SK-N-SH (cell line): ENCODE measurements at regions of chr12 and their contacts with region 1.

Region 1: DNA sequence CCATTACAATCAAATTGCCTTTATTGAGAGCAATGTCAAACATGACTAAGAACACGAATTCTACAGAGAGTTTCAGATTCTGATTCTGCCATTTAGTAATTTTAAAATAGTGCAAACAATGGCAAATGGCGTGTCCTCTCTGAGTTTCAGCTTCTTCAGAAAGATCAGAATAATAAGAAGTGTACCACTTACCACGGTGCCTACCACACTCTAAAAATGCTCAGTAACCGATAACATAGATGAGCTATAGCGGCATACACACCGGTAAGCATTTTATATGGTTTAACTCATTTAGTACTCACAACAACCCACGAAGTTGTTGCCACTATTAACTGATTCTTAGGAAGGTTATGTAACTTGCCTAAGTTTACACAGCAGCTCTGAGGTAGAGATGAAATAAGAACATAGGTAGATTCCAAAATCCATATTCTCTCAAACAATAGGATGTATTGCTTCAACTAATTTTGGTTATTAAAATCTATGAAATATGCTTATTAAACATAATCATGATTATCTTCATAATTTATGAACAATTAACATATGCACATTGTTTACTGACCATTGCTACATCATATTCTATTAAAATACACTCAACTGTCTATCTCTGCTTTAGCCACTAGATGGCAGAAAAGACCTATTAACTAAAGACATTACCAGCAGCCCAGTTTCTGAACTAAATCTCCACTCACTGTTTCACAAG is 38.3 kb downstream of the SLC6A15 start:
- DNase-seq: peak; percentile 38
- H3K4me3 ChIP-seq: no peak overlapping the region; a peak in 1 of 4 replicates
- H3K27ac ChIP-seq: no peak overlapping the region
- H3K4me1 ChIP-seq: peaks cover 0 to 2% of the 10 kb centered on the region in 2 experiments; a peak in 2 of 4 replicates
- H3K27me3 ChIP-seq: no peaks in the 10 kb centered on the region
- CTCF ChIP-seq: peak; percentile 87
- EP300 ChIP-seq: no peak
- RAD21 ChIP-seq: peak; percentile 97

Region 2: DNA sequence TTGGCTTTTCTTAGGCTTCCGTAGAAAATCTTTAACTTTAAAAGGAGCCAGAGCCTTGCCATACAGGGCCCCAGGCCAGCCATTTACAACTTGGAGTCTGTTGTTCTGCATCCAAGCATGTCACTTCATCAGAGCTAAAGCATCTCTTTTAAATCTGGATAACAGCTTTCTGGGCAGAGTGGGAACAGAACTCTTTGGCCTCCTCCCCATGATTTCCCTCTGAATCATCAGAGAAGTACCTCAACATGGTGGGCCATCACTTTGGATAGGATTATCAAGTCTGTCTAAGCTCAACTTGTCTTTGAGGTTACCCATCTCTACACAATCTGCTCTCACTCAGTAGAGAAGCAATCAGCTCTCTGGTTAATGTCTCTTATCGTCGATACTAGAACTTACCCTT is 132.6 kb before region 1 on chr12:
- CTCF ChIA-PET with region 1: no interaction called
- POLR2A ChIA-PET with region 1: no interaction called
- DNase-seq: no peak
- H3K4me3 ChIP-seq: no peak overlapping the region
- H3K27ac ChIP-seq: no peak overlapping the region
- H3K4me1 ChIP-seq: peaks cover 0 to 5% of the 10 kb centered on the region in 2 experiments; a peak in 3 of 4 replicates
- H3K27me3 ChIP-seq: no peaks in the 10 kb centered on the region
- CTCF ChIP-seq: no peak
- EP300 ChIP-seq: peak in 1 of 2 experiments; percentile 28; a peak in 1 of 4 replicates
- RAD21 ChIP-seq: no peak

Region 3: DNA sequence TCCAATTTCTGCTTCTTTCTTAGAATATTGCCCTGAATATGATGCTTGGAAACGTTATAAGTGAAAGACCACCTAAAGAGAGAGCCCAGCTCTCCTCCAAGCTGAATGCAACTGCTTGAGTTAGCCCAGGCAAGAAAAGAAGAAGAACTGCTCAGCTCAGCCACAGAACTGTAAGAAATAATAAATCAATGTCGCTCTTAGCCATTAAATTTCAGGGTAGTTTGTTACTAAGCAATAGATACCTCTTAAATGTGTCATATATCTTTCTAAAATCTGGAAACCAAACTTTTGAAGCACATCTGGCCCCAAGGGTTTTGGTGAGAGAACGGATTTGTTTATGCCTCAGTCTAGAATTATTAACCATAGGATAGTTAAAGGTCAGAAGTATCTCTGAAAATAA is 12.1 kb before region 1 on chr12:
- CTCF ChIA-PET with region 1: interaction called, 18 read pairs
- POLR2A ChIA-PET with region 1: no interaction called
- DNase-seq: no peak
- H3K4me3 ChIP-seq: no peak overlapping the region
- H3K27ac ChIP-seq: no peak overlapping the region
- H3K4me1 ChIP-seq: peaks cover 0 to 3% of the 10 kb centered on the region in 2 experiments; a peak in 2 of 4 replicates
- H3K27me3 ChIP-seq: no peaks in the 10 kb centered on the region
- CTCF ChIP-seq: no peak
- EP300 ChIP-seq: no peak
- RAD21 ChIP-seq: no peak

Region 4: DNA sequence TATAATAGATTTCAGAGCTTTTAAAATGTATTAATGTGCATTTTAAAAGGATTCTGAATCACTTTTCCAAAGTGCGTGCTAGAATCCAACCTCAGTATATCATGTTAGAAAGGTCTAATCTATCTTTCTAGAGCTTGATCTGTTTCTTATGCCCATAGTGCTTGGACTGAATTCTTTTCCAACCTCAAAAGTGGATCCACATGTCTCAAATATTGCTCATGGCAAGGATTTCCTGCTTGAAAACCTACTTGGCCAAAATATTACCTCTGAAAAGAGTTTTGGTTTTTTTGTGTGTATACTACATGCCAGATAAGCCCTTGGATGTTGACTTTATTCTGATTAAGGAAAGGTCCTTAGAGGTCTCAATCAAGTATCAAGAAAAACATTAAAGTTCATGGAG is 55.2 kb after region 1 on chr12:
- CTCF ChIA-PET with region 1: interaction called, 14 read pairs
- POLR2A ChIA-PET with region 1: no interaction called
- DNase-seq: no peak
- H3K4me3 ChIP-seq: no peak overlapping the region
- H3K27ac ChIP-seq: no peak overlapping the region
- H3K4me1 ChIP-seq: no peaks in the 10 kb centered on the region
- H3K27me3 ChIP-seq: no peaks in the 10 kb centered on the region
- CTCF ChIP-seq: no peak
- EP300 ChIP-seq: no peak
- RAD21 ChIP-seq: no peak

Region 5: DNA sequence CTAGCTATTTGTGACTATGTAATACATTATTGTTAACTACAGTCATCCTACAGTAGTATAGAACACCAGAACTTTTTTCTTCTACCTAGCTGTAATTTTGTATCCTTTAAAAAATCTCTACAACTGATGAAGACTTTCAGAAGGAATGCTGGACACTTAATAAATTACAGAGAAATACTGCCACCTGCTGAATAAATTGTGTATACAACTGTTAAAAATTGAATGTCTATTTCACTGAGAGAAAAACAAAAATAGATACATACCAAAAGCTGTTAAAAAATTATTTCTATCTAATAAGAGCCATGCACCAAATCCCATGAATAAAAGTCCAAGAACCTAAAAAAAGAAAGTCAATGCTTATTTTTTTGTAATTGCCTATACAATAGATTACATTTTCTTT is 155.2 kb after region 1 on chr12:
- CTCF ChIA-PET with region 1: interaction called, 292 read pairs
- POLR2A ChIA-PET with region 1: no interaction called
- DNase-seq: no peak
- H3K4me3 ChIP-seq: no peak overlapping the region
- H3K27ac ChIP-seq: no peak overlapping the region
- H3K4me1 ChIP-seq: peaks cover 0 to 3% of the 10 kb centered on the region in 2 experiments; a peak in 2 of 4 replicates
- H3K27me3 ChIP-seq: no peaks in the 10 kb centered on the region
- CTCF ChIP-seq: peak; percentile 73
- EP300 ChIP-seq: no peak
- RAD21 ChIP-seq: peak; percentile 77

Region 6: GRCh38 chr12:85057370-85057963 is 183.2 kb after region 1 on chr12:
- CTCF ChIA-PET with region 1: interaction called, 27 read pairs
- POLR2A ChIA-PET with region 1: no interaction called
- DNase-seq: peak; percentile 33
- H3K4me3 ChIP-seq: no peak overlapping the region
- H3K27ac ChIP-seq: no peak overlapping the region
- H3K4me1 ChIP-seq: no peaks in the 10 kb centered on the region
- H3K27me3 ChIP-seq: no peaks in the 10 kb centered on the region
- CTCF ChIP-seq: peak; percentile 87
- EP300 ChIP-seq: no peak
- RAD21 ChIP-seq: peak; percentile 67